Panc1 (cell line): ENCODE measurements at regions of chr6 and their contacts with region 1.

Region 1: GRCh38 chr6:161200610-161201370 is 73.1 kb downstream of the AGPAT4 start:
- DNase-seq: no peak
- ATAC-seq: peak; percentile 63; the same call in 1 of the 2 replicates
- H3K4me3 ChIP-seq: no peak overlapping the region
- H3K27ac ChIP-seq: no peak overlapping the region
- H3K4me1 ChIP-seq: no peaks in the 10 kb centered on the region
- H3K27me3 ChIP-seq: no peaks in the 10 kb centered on the region
- CTCF ChIP-seq: peak; percentile 44

Region 2: GRCh38 chr6:160544802-160545201 is 656.0 kb before region 1 on chr6:
- CTCF ChIA-PET with region 1: no interaction called
- POLR2A ChIA-PET with region 1: no interaction called
- in situ Hi-C with region 1: no loop called
- intact Hi-C with region 1: loop called (anchors 10 kb)
- DNase-seq: no peak
- ATAC-seq: no peak
- H3K4me3 ChIP-seq: no peak overlapping the region
- H3K27ac ChIP-seq: no peak overlapping the region
- H3K4me1 ChIP-seq: no peaks in the 10 kb centered on the region
- H3K27me3 ChIP-seq: no peaks in the 10 kb centered on the region
- CTCF ChIP-seq: no peak

Region 3: DNA sequence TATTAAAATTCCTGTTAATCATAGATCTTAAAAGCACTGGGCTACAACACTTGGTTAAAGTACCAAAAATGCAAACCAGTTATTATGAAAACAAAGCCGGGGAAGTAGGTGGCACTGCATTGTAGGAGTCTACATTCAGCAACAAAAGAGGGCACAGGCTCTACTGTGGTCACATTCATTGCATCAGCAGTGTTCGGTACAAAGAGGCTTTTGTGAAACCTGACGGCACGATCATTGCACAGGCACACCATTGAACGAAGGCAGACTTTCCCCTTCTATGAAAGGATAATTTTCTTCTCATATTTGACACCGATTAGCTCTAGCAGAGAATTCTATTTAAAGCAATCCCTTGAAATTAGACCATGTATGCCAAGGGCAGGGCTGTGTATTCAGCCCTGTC is 117.7 kb after region 1 on chr6:
- CTCF ChIA-PET with region 1: no interaction called
- POLR2A ChIA-PET with region 1: no interaction called
- in situ Hi-C with region 1: no loop called
- intact Hi-C with region 1: no loop called
- DNase-seq: no peak
- ATAC-seq: no peak
- H3K4me3 ChIP-seq: no peak overlapping the region
- H3K27ac ChIP-seq: no peak overlapping the region
- H3K4me1 ChIP-seq: no peaks in the 10 kb centered on the region
- H3K27me3 ChIP-seq: no peaks in the 10 kb centered on the region
- CTCF ChIP-seq: no peak